CD14-positive monocyte (primary cell): ENCODE measurements at regions of chr6 and their contacts with region 1.

Region 1: DNA sequence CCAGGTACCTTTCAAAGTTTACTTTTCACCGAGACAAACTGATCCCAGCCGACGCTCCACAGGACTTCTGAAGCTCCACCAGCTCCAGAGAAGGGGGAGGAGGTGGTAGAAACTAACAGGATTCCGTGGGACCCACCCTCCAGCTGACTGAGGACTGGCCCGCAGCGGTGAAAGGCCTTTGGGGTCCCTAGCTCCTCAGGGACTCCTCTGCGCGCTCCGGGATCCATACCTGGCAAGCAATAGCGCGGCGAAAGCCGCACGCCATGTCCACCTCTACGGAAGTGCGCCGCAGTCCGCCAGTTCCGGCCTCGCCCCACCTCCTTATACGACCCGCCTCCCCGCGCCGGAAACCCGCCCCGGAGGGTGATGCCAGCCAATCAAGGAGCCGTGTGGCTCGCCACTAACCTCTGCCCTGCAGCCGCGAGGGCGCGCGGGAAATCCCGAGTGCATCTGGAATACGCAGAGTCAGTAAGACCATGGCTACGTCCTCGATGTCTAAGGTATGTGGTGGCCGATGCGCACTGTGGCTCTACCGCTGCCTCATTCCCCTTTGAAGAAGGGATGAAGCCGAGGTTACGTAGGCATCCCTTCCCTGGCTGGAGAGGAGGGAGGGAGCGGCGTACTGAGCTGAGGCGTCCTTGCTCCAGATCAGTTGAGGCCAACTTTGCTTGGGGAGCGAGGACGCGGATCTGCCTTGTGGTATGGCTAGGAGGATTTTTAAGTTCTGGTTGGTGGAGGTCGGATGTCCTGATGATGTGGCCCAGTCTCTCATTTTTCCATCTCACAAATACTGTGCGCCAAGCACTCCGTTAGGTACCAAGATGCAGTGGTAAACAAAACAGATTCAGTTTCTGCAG is at the starts of genes ORC3 and RARS2:
- DNase-seq: peak; percentile 90 to 94 (median 93)
- H3K4me3 ChIP-seq: peak within 1 kb of the TSS; percentile 90 to 98 (median 93)
- H3K4me3 Mint-ChIP-seq: peak within 1 kb of the TSS; percentile 91 to 98
- H3K27ac ChIP-seq: peak within 1 kb of the TSS; percentile 66 to 98
- H3K27ac Mint-ChIP-seq: peak within 1 kb of the TSS; percentile 89 to 96 (median 93)
- H3K4me1 ChIP-seq: peaks cover 23 to 34% of the 10 kb centered on the region in 2 donors
- H3K4me1 Mint-ChIP-seq: peaks cover 38% of the 10 kb centered on the region
- H3K27me3 ChIP-seq: no peaks in the 10 kb centered on the region
- H3K27me3 Mint-ChIP-seq: no peaks in the 10 kb centered on the region
- CTCF ChIP-seq: no peak
- polyA plus RNA-seq, gene ORC3: 9.1 to 20.7 (median 16.2) TPM
- polyA plus RNA-seq, gene RARS2: 8.6 to 33.0 (median 27.3) TPM

Region 2: GRCh38 chr6:87407901-87408720 is 181.8 kb before region 1 on chr6 and contains the start of gene CFAP206:
- intact Hi-C with region 1: no loop called
- DNase-seq: peak; percentile 69 to 75 (median 69)
- H3K4me3 ChIP-seq: peak within 1 kb of the TSS; percentile 88 to 91 (median 89)
- H3K4me3 Mint-ChIP-seq: peak within 1 kb of the TSS; percentile 85 to 91
- H3K27ac ChIP-seq: peak within 1 kb of the TSS; percentile 49 to 64
- H3K27ac Mint-ChIP-seq: peak within 1 kb of the TSS; percentile 40 to 83 (median 72)
- H3K4me1 ChIP-seq: peaks cover 12 to 17% of the 10 kb centered on the region in 2 donors
- H3K4me1 Mint-ChIP-seq: peaks cover 18% of the 10 kb centered on the region
- H3K27me3 ChIP-seq: peaks cover 0 to 2% of the 10 kb centered on the region in 2 donors
- H3K27me3 Mint-ChIP-seq: peaks cover 4 to 13% (median 9%) of the 10 kb centered on the region in 3 donors
- CTCF ChIP-seq: no peak
- polyA plus RNA-seq, gene CFAP206: not detected

Region 3: DNA sequence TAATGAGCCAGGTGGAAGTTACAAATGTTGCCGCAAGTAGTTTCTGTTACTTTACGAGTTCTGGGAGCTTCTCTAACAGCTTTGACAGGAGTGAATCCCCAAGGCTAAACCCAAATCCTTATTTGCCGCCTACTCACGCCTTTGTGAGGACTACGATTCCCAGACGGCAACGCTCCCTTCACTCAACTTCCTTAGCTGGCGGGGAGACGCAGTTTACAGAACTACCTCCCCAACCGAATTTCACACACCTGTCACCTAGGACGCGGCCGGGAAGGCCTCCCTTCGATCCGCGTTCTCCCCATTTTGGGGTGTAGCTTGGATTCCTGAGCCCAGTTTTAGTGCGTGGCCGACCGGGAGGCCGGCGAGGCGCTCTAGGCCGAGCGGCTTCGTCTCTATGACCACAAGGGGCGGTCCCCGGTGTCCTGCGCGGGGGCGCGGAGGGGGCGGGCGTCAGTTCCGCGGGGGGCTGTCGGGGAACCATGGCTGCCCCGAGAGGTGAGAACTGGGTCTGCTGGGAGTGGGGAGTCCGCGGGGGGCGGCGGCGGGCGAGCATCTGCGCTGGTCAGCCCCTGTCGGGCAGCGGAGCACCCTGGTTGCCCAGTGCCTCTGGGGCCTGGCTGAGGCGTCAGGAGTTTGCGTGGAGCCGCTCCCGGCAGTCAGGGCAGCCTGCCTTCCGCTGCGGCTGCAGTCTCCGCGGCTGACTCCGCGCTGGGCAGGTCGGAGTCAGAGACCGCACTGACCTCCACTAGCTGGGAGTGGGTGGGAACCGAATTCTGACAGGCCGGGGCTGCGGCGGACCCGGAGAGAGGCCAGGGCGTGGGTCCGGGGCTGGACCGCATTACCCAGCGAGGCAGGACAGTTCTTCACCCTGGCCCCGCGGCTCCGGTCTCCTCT is 117.1 kb before region 1 on chr6 and contains the start of gene SLC35A1:
- intact Hi-C with region 1: loop called (anchors 10 kb)
- DNase-seq: peak; percentile 56 to 63 (median 58)
- H3K4me3 ChIP-seq: peak within 1 kb of the TSS; percentile 90 to 95 (median 91)
- H3K4me3 Mint-ChIP-seq: peak within 1 kb of the TSS; percentile 93 to 95
- H3K27ac ChIP-seq: peak within 1 kb of the TSS; percentile 90 to 98
- H3K27ac Mint-ChIP-seq: peak within 1 kb of the TSS; percentile 93 to 100 (median 99)
- H3K4me1 ChIP-seq: peaks cover 22 to 28% of the 10 kb centered on the region in 2 donors
- H3K4me1 Mint-ChIP-seq: peaks cover 33% of the 10 kb centered on the region
- H3K27me3 ChIP-seq: no peaks in the 10 kb centered on the region
- H3K27me3 Mint-ChIP-seq: peaks cover 2 to 10% (median 8%) of the 10 kb centered on the region in 3 donors
- CTCF ChIP-seq: peak; percentile 15
- polyA plus RNA-seq, gene SLC35A1: 44.6 to 103 (median 90.6) TPM

Region 4: GRCh38 chr6:87540539-87540938 is 49.4 kb before region 1 on chr6:
- intact Hi-C with region 1: no loop called
- DNase-seq: no peak
- H3K4me3 ChIP-seq: no peak overlapping the region
- H3K4me3 Mint-ChIP-seq: no peak overlapping the region
- H3K27ac ChIP-seq: no peak overlapping the region
- H3K27ac Mint-ChIP-seq: no peak overlapping the region
- H3K4me1 ChIP-seq: peaks cover 3 to 12% of the 10 kb centered on the region in 2 donors
- H3K4me1 Mint-ChIP-seq: peaks cover 10% of the 10 kb centered on the region
- H3K27me3 ChIP-seq: no peaks in the 10 kb centered on the region
- H3K27me3 Mint-ChIP-seq: peaks cover 0 to 4% (median 0%) of the 10 kb centered on the region in 3 donors
- CTCF ChIP-seq: no peak

Region 5: DNA sequence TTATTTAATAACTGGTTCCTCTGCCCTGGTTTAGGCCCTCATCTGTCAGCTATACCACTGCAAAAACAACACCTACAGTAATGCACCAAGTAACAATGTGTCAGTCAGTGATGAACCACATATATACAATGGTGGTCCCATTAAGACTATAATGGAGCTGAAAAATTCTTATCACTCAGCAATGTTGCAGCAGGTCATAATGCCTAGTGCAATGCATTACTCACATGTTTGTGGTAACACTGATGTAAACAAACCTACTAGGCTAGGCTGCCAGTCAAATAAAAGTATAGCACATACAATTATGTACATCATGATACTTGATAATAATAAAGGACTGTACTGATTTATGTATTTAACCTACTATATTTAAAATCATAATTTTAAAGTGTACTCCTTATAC is 31.5 kb before region 1 on chr6:
- intact Hi-C with region 1: no loop called
- DNase-seq: no peak
- H3K4me3 ChIP-seq: no peak overlapping the region
- H3K4me3 Mint-ChIP-seq: no peak overlapping the region
- H3K27ac ChIP-seq: no peak overlapping the region
- H3K27ac Mint-ChIP-seq: no peak overlapping the region
- H3K4me1 ChIP-seq: no peaks in the 10 kb centered on the region
- H3K4me1 Mint-ChIP-seq: no peaks in the 10 kb centered on the region
- H3K27me3 ChIP-seq: no peaks in the 10 kb centered on the region
- H3K27me3 Mint-ChIP-seq: no peaks in the 10 kb centered on the region
- CTCF ChIP-seq: no peak

Region 6: DNA sequence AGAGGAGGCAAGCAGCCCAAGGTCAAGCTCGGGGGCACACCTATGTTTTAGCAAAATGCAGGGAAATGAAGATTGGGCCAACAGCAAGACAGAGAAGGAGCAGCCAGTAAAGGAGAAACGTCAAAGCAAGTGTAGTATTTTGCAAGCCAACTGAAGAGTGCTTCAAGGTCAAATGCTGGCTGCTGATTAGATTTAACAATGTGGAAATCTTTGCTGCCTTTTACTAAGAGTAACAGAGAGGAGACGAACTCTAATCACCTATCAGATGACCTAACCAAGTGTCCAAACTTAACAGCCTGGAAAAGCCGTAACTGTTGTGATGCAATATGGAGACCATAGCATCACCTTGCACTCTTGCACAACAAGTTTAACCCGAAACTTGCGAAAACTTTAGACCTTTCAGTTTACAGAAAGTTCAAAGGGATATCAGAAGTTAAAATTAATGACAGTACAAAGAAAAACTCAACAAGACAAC is 81.7 kb after region 1 on chr6:
- intact Hi-C with region 1: loop called in 1 of 2 experiments (anchors 10 kb)
- DNase-seq: peak in 2 of 3 donors; percentile 43 to 49
- H3K4me3 ChIP-seq: no peak overlapping the region
- H3K4me3 Mint-ChIP-seq: no peak overlapping the region
- H3K27ac ChIP-seq: peak overlapping the region; percentile 12 to 66
- H3K27ac Mint-ChIP-seq: peak overlapping the region; percentile 19 to 79 (median 68)
- H3K4me1 ChIP-seq: peaks cover 15 to 26% of the 10 kb centered on the region in 2 donors
- H3K4me1 Mint-ChIP-seq: peaks cover 25% of the 10 kb centered on the region
- H3K27me3 ChIP-seq: no peaks in the 10 kb centered on the region
- H3K27me3 Mint-ChIP-seq: peaks cover 1 to 2% (median 2%) of the 10 kb centered on the region in 3 donors
- CTCF ChIP-seq: no peak